GM10248 (cell line): ENCODE measurements at regions of chr20 and their contacts with region 1.

Region 1: DNA sequence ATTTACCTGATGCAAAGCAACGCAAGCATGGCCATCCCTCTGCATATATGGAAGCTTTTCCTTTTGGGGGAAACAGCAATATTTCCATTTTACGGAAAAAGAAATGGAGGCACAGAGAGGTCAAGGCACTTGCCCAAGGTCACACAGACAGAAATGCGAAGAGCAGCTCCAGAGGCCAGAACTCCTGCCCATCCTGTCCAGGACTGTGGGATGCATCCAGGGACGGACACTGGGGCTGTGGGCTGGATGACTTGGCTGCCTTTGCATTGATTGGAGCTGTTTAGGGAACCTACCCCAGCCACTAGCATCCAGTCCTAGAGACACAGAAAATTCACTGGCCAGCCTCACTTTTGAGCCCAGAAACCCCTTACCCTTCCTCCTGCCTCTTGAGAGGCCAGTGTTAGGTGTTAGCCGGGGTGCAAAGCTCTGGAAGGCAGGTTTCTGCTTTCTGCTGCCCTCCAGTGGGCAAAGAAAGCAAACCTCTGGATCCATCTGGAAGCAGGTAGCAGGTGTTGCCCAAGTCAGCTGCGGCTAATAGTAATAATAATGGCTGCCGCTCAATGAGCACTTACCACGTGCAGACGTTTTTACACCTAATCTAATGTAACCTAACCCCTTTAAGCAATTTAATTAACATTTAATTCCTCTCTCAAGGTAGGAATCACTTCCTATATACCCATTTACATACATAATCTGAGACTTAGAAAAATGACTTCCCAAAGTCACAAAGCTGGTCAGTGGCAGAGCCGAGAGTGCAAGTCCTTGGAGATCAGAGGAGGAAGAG is 31.7 kb upstream of the CCN5 start:
- DNase-seq: peak; percentile 83
- CTCF ChIP-seq: peak; percentile 76

Region 2: GRCh38 chr20:44388466-44389023 is 294.9 kb before region 1 on chr20:
- CTCF ChIA-PET with region 1: interaction called, 21 read pairs
- POLR2A ChIA-PET with region 1: interaction called, 4 read pairs
- DNase-seq: peak; percentile 85
- CTCF ChIP-seq: peak; percentile 91

Region 3: DNA sequence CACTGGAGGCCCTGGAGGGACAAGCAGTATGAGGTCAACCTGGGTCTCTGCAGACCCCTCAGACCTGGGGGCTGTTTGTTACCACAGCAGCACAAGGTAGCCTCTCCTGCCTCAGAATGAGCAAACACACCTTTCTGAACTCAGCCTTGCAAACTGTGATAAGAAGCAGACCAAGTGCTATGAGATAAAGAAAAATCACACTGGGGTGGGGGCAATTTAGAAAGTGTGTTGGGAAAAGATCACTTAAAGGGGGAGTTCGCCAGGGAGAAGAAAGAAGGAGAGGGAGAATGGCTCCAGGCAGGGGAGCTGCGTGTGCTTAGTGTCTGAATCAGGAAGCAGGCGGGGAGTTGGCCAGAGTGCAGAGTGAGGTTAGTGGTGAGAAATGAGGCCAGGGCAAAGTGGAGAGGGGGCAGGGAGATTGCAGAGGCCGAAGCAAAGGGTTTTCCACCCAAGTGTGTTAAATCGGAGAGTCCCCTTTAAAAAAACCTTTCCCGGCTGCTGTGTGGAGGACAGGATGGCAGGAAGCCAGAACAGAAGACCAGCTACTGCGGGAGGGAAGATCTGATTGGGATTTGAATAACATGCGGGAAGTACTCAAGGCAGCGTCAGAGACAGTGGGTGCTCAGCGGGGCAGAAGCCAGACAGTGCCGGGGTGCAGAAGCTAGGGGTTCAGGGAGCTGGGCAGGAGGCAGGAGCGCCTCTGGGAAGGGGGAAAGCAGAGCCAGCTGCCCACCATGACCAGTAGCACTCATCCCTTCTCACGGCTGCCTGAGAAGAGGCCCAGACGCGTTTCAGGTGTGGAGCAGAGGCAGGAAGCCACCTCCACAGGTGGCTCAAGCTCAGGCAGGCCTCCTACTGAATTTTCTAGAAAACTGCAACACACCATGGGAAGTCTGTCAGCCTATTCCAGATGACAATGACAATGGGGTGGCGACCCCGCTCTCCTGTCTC is 41.0 kb before region 1 on chr20:
- CTCF ChIA-PET with region 1: interaction called, 41 read pairs
- POLR2A ChIA-PET with region 1: no interaction called
- DNase-seq: peak; percentile 72
- CTCF ChIP-seq: no peak

Region 4: GRCh38 chr20:44702776-44703175 is 19.3 kb after region 1 on chr20:
- CTCF ChIA-PET with region 1: interaction called, 68 read pairs
- POLR2A ChIA-PET with region 1: no interaction called
- DNase-seq: peak; percentile 64
- CTCF ChIP-seq: no peak

Region 5: GRCh38 chr20:44738813-44739477 is 55.5 kb after region 1 on chr20:
- CTCF ChIA-PET with region 1: interaction called, 178 read pairs
- POLR2A ChIA-PET with region 1: no interaction called
- DNase-seq: peak; percentile 69
- CTCF ChIP-seq: no peak

Region 6: GRCh38 chr20:44819936-44820335 is 136.5 kb after region 1 on chr20:
- CTCF ChIA-PET with region 1: no interaction called
- POLR2A ChIA-PET with region 1: no interaction called
- DNase-seq: no peak
- CTCF ChIP-seq: no peak

Region 7: DNA sequence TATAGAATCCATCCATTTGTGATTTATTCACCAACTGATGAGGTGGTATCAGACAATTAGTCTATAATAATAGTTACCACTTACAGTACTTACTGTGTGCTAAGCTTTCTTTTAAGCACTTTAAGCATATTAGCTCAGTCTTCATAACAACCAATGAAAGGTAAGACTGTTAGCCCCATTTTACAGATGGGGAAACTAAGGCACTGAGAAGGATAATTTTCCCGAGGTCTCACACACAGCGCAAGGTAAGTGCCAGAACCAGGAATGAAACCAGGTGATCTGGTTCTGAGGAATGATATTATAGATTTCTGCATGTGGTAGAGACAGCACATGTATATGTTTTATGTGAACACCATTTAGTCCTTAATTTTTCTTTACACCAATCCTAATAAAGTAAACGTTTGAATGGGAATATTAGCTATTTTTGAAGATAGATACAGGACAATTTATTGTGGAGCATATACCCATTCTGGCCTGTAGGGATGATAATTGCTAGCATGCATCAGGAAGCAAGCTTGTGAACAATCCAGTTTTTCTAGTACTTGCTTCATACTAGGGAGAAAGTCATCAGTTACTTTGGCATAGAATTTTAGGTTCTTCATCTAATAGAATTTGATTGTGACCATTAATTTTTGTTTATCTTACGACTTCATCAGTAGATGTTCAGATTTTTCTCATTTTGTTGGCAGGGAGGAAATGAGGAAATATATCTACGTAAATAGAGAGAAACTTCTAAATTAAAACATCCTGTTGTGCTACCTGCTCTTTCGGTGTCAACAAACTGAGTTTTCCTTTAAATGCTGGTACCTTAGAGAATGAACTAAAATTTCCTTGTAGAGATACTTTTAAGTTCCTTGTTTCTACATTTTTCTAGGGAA is 205.0 kb after region 1 on chr20:
- CTCF ChIA-PET with region 1: interaction called, 13 read pairs
- POLR2A ChIA-PET with region 1: no interaction called
- DNase-seq: no peak
- CTCF ChIP-seq: no peak